HCT116 (cell line): ENCODE measurements at regions of chr13 and their contacts with region 1.

Region 1: DNA sequence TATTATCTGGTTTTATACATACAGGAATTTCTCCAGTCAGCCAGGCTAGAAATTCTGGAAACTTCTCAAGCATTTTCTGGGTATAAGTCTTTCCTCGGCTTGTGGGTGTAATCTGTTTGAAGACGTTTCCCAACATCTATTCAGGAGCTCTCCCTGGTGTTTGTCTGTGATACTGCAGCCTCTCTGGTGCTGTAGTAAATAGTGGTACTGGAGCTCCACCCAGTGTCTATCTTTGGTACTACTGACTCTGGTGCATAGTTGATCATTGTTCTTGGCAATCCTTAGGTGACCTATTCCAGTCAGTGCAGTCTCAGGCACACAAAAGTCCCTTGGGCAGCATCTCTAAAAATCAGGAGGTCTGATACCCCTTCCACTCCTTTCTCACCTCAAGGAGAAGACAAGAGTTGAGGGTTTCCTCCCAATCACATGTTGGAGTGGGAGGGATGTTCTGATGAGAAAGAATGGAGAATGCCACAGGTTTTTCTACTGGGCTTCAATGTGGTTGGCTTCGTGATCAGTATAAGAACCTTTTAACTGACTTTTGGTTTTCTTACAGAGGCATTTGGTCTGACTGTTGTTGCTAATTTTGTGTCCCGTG is 115.5 kb downstream of the CYSLTR2 start:
- DNase-seq: peak; percentile 85
- ATAC-seq: peak; percentile 98
- H3K4me3 ChIP-seq: no peak overlapping the region
- H3K27ac ChIP-seq: no peak overlapping the region
- H3K4me1 ChIP-seq: 0 out of 4 replicates have a peak, but pooled peaks cover 0 to 3% of the 10 kb centered on the region in 2 experiments
- H3K27me3 ChIP-seq: no peaks in the 10 kb centered on the region
- CTCF ChIP-seq: peak; percentile 99 to 100 (median 100)
- POLR2A ChIP-seq: no peak
- RAD21 ChIP-seq: peak; percentile 100

Region 2: GRCh38 chr13:46831588-46832194 is 1937.5 kb before region 1 on chr13:
- CTCF ChIA-PET with region 1: no interaction called
- POLR2A ChIA-PET with region 1: no interaction called
- RAD21 ChIA-PET with region 1: no interaction called
- intact Hi-C with region 1: loop called (anchors 1 kb)
- DNase-seq: peak; percentile 51
- ATAC-seq: peak; percentile 91
- H3K4me3 ChIP-seq: no peak overlapping the region
- H3K27ac ChIP-seq: no peak overlapping the region
- H3K4me1 ChIP-seq: no peaks in the 10 kb centered on the region
- H3K27me3 ChIP-seq: no peaks in the 10 kb centered on the region
- CTCF ChIP-seq: peak; percentile 48 to 95 (median 59); a peak in 5 of 6 replicates
- POLR2A ChIP-seq: no peak
- RAD21 ChIP-seq: peak; percentile 78

Region 3: GRCh38 chr13:48094781-48095502 is 674.3 kb before region 1 on chr13 and contains the start of gene MED4:
- CTCF ChIA-PET with region 1: interaction called, 3 read pairs
- POLR2A ChIA-PET with region 1: no interaction called
- RAD21 ChIA-PET with region 1: no interaction called
- intact Hi-C with region 1: loop called (anchors 1 kb)
- DNase-seq: peak; percentile 84
- ATAC-seq: peak; percentile 95
- H3K4me3 ChIP-seq: peak within 1 kb of the TSS; percentile 89 to 98
- H3K27ac ChIP-seq: peak within 1 kb of the TSS; percentile 36
- H3K4me1 ChIP-seq: peaks cover 7 to 10% of the 10 kb centered on the region in 2 experiments; a peak in 3 of 4 replicates
- H3K27me3 ChIP-seq: no peaks in the 10 kb centered on the region
- CTCF ChIP-seq: peak; percentile 92 to 99 (median 99)
- POLR2A ChIP-seq: no peak
- RAD21 ChIP-seq: peak; percentile 36
- total RNA-seq, gene MED4: 46.9 TPM

Region 4: GRCh38 chr13:48334534-48335127 is 434.6 kb before region 1 on chr13:
- CTCF ChIA-PET with region 1: interaction called, 6 read pairs
- POLR2A ChIA-PET with region 1: no interaction called
- RAD21 ChIA-PET with region 1: no interaction called
- intact Hi-C with region 1: loop called (anchors 1 kb)
- DNase-seq: peak; percentile 19
- ATAC-seq: peak; percentile 67
- H3K4me3 ChIP-seq: no peak overlapping the region
- H3K27ac ChIP-seq: no peak overlapping the region
- H3K4me1 ChIP-seq: no peaks in the 10 kb centered on the region
- H3K27me3 ChIP-seq: no peaks in the 10 kb centered on the region
- CTCF ChIP-seq: peak; percentile 37 to 72 (median 42); a peak in 5 of 6 replicates
- POLR2A ChIP-seq: no peak
- RAD21 ChIP-seq: peak; percentile 69

Region 5: DNA sequence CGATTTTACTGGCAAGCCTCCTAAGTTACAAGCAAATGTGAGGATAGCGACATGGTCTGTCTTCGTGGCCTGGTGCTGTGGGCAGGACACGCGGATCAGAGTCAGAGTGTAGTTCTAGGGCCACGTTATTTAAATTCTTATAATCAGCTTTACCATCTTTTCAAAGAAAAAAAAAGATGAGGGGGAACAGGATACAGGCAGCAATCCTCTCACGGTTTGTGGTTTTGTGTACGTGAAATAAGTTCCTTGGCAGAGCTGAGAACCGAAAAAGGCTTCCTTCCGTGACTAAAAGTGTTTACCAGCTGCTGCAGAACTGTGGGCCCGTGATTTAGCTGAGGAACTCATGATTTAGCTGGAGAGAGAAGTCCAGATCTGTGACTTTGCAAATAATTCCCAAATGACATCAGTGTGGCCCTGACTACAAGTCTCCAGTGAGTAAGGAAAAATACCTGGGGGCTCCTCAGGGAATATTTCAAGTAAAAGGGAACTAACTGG is 263.6 kb before region 1 on chr13:
- CTCF ChIA-PET with region 1: no interaction called
- POLR2A ChIA-PET with region 1: no interaction called
- RAD21 ChIA-PET with region 1: no interaction called
- intact Hi-C with region 1: no loop called
- DNase-seq: no peak
- ATAC-seq: no peak
- H3K4me3 ChIP-seq: no peak overlapping the region
- H3K27ac ChIP-seq: no peak overlapping the region
- H3K4me1 ChIP-seq: no peaks in the 10 kb centered on the region
- H3K27me3 ChIP-seq: no peaks in the 10 kb centered on the region
- CTCF ChIP-seq: no peak
- POLR2A ChIP-seq: no peak
- RAD21 ChIP-seq: no peak

Region 6: GRCh38 chr13:48749699-48750473 is 19.3 kb before region 1 on chr13:
- CTCF ChIA-PET with region 1: interaction called, 4 read pairs
- POLR2A ChIA-PET with region 1: no interaction called
- RAD21 ChIA-PET with region 1: no interaction called
- intact Hi-C with region 1: loop called (anchors 1 kb)
- DNase-seq: peak; percentile 96
- ATAC-seq: peak; percentile 97
- H3K4me3 ChIP-seq: 0 out of 4 replicates have a peak overlapping the region, but pooled peaks of 1 of the 2 experiments have one; percentile 9
- H3K27ac ChIP-seq: peak overlapping the region; percentile 29; the same call in 1 of the 2 replicates
- H3K4me1 ChIP-seq: peaks cover 12 to 27% of the 10 kb centered on the region in 2 experiments
- H3K27me3 ChIP-seq: no peaks in the 10 kb centered on the region
- CTCF ChIP-seq: peak; percentile 48 to 64 (median 52); a peak in 5 of 6 replicates
- POLR2A ChIP-seq: no peak
- RAD21 ChIP-seq: peak; percentile 47